ENCODE measurements at regions of chr18 and their contacts with region 1.

Region 1: DNA sequence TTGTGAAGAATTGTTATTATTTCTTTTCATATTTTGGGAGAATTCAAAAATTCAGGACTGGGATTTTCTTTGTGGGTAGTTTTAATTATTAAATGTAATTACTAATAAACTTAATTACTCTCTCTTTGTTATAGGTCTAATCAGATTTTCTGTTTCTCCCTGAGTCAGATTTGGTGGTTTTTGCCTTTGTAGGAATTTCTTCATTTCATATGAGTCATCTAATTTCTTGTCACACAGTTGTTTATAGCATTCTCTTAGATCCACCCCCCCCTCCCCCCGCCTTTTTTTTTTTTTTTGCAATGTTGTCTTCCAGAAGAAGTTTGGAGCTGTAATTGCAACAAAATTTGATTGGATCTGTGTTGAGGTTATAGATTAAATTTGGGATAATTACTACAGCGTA is 26.0 kb upstream of the GALR1 start:
- DNase-seq: no peak
- ATAC-seq: peak; percentile 70
- H3K4me3 Mint-ChIP-seq: no peak overlapping the region
- H3K27ac Mint-ChIP-seq: no peak overlapping the region
- H3K4me1 Mint-ChIP-seq: peaks cover 15% of the 10 kb centered on the region
- H3K27me3 Mint-ChIP-seq: peaks cover 12% of the 10 kb centered on the region

Region 2: GRCh38 chr18:77061946-77062517 is 161.6 kb before region 1 on chr18:
- CTCF ChIA-PET with region 1: no interaction called
- POLR2A ChIA-PET with region 1: no interaction called
- intact Hi-C with region 1: loop called in 1 of 2 experiments (anchors 2 kb)
- DNase-seq: peak; percentile 42
- ATAC-seq: peak; percentile 17
- H3K4me3 Mint-ChIP-seq: peak overlapping the region; percentile 47
- H3K27ac Mint-ChIP-seq: peak overlapping the region; percentile 98
- H3K4me1 Mint-ChIP-seq: peaks cover 83% of the 10 kb centered on the region
- H3K27me3 Mint-ChIP-seq: no peaks in the 10 kb centered on the region

Region 3: DNA sequence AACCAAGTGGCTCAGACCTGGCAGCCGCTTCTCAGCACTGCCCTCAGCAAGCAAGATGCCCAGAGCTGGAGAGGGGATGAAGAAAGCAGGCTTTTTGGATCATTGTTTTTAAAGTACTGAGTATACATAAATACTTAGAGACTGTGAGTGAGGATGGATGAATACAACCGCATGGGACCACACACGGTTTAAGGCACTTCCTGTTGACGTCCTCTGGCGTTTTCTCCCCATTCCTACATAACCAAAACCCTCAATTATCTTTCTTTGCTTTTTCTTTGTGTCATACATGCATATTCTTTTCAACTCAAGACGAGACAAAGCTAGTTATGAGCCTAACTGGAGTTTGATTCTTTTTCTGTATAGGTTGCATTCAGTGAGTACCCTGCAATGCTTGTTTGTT is 224.4 kb after region 1 on chr18:
- CTCF ChIA-PET with region 1: no interaction called
- POLR2A ChIA-PET with region 1: no interaction called
- intact Hi-C with region 1: no loop called
- DNase-seq: no peak
- ATAC-seq: no peak
- H3K4me3 Mint-ChIP-seq: no peak overlapping the region
- H3K27ac Mint-ChIP-seq: no peak overlapping the region
- H3K4me1 Mint-ChIP-seq: no peaks in the 10 kb centered on the region
- H3K27me3 Mint-ChIP-seq: peaks cover 19% of the 10 kb centered on the region

Region 4: GRCh38 chr18:77560341-77560992 is 336.8 kb after region 1 on chr18:
- CTCF ChIA-PET with region 1: no interaction called
- POLR2A ChIA-PET with region 1: no interaction called
- intact Hi-C with region 1: loop called in 1 of 2 experiments (anchors 1 kb)
- DNase-seq: peak; percentile 33
- ATAC-seq: peak; percentile 96
- H3K4me3 Mint-ChIP-seq: no peak overlapping the region
- H3K27ac Mint-ChIP-seq: no peak overlapping the region
- H3K4me1 Mint-ChIP-seq: peaks cover 9% of the 10 kb centered on the region
- H3K27me3 Mint-ChIP-seq: peaks cover 19% of the 10 kb centered on the region